OCI-LY7 (cell line): ENCODE measurements at regions of chr3 and their contacts with region 1.

Region 1: DNA sequence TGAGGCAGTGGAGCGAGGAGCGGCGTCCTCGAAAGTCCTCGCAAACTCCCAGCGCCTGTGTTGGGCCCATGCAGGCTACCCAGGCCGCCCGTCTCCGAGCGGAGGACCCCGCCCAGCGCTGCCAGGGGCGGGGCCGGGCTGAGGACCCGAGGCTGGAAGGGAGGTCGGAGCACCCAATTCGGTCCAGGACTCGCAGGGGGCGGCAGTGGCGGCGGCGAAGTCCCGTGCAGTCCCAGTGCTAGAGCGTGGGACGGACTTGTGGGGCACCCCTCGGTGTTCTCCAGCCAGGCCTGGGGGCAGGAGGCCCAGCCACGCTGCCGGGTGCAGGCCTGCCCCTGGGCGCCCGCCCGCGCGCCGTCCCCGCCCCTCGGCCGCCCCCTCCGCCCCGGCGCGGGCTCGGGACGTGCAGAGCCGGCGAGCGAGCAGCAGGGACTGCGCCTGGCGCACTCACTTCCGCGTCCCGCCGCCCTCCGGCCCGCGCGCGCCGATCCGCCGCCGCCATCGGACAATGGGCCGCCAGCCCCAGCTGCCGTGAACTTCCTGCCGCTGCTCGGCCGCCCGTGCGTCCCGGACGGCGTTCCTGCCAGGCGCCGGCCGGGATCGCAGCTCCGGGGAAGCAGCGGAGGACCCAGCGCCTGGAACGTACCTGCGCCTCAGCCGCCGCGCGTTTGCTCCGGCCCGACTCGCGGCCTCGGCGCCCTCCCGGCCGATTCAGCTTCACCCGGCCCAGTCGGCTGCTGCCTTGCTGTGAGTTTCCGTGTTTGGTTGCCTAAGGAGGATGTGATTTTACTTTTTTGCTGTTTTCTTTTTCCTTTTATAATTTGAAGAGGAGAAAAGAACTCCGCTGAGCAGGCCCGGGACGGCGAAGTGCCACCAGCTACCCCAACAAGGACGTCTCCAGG is 592 bp upstream of the LIMD1 start:
- DNase-seq: peak; percentile 80
- H3K4me3 ChIP-seq: peak overlapping the region; percentile 69
- H3K27ac ChIP-seq: peak overlapping the region; percentile 39
- H3K4me1 ChIP-seq: peaks cover 56% of the 10 kb centered on the region
- CTCF ChIP-seq: no peak

Region 2: GRCh38 chr3:45507820-45508317 is 86.1 kb before region 1 on chr3:
- CTCF ChIA-PET with region 1: no interaction called
- POLR2A ChIA-PET with region 1: no interaction called
- intact Hi-C with region 1: loop called (anchors 1 kb)
- DNase-seq: no peak
- H3K4me3 ChIP-seq: no peak overlapping the region
- H3K27ac ChIP-seq: no peak overlapping the region
- H3K4me1 ChIP-seq: no peaks in the 10 kb centered on the region
- CTCF ChIP-seq: no peak

Region 3: DNA sequence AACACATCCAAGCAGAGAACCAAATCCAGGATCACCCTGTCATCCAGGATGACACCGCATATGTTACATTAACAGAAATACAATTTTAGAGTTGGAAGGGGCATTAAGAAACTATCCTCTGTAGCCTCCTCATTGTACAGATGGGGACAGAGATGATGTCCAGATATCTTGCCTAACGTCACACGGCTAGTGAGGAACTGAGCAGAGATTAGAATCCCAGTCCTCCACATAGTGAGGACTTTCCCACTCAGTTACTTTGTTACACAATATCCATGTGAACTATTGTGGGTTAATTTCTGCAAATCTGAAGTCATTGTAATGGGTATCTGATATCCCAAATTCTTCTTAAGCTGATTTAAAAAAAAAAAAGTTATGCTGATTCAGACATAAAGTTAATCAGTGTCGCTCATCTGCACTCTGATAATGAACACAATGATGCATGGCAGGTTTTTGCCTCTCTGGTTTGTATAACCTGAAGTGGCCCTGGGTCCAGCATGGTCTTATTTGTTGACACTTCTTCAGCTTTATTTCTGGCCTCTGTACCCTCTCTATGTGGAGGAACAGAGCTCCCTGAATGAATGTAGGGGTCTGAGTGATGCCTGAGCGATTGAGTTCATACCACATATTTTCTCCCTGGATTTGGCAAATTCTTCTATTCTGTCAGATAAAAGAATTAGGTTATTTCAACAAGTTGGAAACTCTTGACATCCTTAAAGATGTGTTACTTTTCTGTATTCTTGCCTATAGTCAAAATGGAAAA is 75.4 kb before region 1 on chr3:
- CTCF ChIA-PET with region 1: no interaction called
- POLR2A ChIA-PET with region 1: no interaction called
- intact Hi-C with region 1: no loop called
- DNase-seq: no peak
- H3K4me3 ChIP-seq: no peak overlapping the region
- H3K27ac ChIP-seq: no peak overlapping the region
- H3K4me1 ChIP-seq: no peaks in the 10 kb centered on the region
- CTCF ChIP-seq: no peak

Region 4: DNA sequence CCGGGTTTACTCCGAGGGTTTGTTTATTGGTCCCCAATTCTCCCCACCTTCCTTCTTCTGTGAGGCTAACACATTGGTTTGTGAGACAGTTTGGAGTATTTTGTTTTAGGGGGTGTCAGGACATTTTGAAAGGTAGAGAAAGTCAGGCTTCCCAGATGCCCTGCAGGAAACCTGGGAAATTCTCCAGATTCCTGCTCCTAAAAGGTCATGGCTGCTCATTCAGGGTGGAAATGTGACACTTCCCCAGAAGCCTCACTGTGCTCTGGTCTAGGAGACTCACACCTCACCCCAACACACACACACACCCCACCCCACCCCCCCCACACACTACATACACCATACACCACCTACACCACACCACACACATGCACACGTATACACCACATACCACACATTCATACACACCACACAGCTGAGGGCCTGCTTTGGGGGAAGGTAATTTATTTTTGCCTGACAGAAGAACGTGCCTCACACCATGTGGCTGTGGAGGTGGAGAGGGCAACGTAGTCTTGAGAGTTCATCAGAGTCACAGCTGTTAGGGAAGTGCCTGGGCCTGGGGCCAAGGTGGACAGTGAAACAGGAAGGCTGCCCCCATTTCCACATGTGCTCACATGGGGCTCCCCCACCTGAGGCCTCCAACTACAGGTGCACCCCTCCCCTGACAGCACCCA is 39.8 kb before region 1 on chr3:
- CTCF ChIA-PET with region 1: interaction called, 4 read pairs
- POLR2A ChIA-PET with region 1: interaction called, 3 read pairs
- intact Hi-C with region 1: loop called (anchors 1 kb)
- DNase-seq: peak; percentile 76
- H3K4me3 ChIP-seq: peak overlapping the region; percentile 43
- H3K27ac ChIP-seq: peak overlapping the region; percentile 67
- H3K4me1 ChIP-seq: peaks cover 34% of the 10 kb centered on the region
- CTCF ChIP-seq: no peak

Region 5: DNA sequence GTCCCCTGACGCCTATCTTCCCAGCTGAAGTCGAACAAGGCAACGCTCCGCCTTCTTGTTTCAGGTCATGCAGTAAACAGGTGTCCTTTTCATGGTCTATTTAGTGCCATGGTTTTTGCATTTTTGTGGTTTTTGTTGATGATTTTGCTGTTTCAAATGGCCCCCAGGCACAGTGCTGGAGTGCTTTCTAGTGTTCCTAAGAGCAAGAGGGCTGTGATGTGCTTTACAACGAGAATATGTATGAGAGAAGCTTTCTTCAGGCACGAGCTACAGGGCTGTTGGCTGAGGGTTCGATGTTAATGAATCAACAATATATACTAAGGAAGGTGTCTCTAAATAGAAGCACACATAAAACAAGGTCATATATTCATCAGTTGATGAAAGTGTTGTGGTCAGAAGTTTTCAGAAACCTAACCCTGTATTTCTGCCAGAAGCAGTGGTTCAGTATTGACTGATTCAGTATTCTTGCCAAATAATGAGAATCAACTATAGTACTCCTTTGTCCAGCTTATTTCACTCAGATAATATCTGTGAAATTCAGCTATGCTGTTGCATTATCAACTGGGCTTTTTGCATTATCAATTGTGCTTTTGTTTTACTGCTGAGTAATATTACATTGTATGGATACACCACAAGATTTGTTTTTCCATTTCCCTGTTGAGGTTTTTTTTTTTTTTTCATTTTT is 19.1 kb after region 1 on chr3:
- CTCF ChIA-PET with region 1: no interaction called
- POLR2A ChIA-PET with region 1: interaction called, 20 read pairs
- intact Hi-C with region 1: loop called (anchors 1 kb)
- DNase-seq: peak; percentile 86
- H3K4me3 ChIP-seq: no peak overlapping the region
- H3K27ac ChIP-seq: no peak overlapping the region
- H3K4me1 ChIP-seq: peaks cover 41% of the 10 kb centered on the region
- CTCF ChIP-seq: no peak